Activated naive CD4-positive, alpha-beta T cell treated with anti-CD3 and anti-CD28 coated beads for 36 hours (primary cell): ENCODE measurements at regions of chr7 and their contacts with region 1.

Region 1: DNA sequence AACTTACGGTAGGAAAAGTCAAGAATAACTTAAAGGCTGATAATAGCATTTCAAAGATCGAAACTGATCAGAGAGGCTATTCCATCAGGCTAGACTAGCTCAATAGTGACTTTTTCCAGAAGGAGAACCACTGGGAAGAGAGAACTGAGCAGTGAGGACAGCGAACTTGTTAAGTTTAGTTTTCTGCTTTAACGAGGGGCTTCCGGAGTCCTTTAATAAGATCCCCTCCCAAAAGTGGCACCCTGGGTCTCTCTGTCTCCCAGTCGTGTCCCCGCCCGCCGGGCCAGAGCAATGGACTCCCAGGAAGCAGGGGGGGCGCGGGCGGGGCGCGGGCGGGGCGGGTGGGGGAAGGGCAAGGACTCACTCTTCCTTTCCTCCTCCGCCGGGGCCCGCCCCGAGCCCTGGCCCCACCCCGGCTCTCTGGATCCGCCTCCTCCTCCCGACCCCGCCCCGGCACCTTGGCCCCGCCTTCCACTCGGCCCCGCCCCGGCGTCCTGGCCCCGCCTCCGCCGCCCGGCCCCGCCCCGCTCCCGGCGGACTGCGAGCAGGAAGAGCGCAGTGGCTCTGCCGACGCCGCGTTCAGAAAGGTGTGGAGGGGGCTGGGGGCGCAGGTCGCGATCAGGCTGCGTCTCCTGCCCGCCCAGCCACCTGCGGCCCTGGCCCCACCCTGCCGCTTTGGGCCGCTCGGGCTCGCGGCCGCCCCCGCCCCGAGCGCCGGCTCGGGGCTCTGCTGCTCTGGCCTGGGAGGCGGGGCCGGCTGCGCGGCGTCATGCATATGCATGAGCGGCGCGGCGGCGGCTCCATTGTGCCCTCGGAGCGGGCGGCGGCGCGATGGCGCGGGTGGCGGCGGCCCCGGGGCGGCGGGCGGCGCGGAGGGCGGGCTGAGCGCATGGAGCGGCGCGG is at the start of gene ZMIZ2:
- DNase-seq: peak; percentile 92
- H3K4me3 Mint-ChIP-seq: peak within 1 kb of the TSS; percentile 82
- H3K27ac Mint-ChIP-seq: peak within 1 kb of the TSS; percentile 88
- H3K4me1 Mint-ChIP-seq: peaks cover 39% of the 10 kb centered on the region
- H3K27me3 Mint-ChIP-seq: no peaks in the 10 kb centered on the region
- total RNA-seq, gene ZMIZ2: 83.1 to 86.5 TPM

Region 2: GRCh38 chr7:44606450-44607254 is 141.6 kb before region 1 on chr7 and contains the start of gene OGDH:
- CTCF ChIA-PET with region 1: no interaction called
- intact Hi-C with region 1: loop called (anchors 1 kb)
- DNase-seq: peak; percentile 100
- H3K4me3 Mint-ChIP-seq: peak within 1 kb of the TSS; percentile 96
- H3K27ac Mint-ChIP-seq: peak within 1 kb of the TSS; percentile 97
- H3K4me1 Mint-ChIP-seq: peaks cover 31% of the 10 kb centered on the region
- H3K27me3 Mint-ChIP-seq: no peaks in the 10 kb centered on the region
- total RNA-seq, gene OGDH: 73.9 to 78.4 TPM

Region 3: DNA sequence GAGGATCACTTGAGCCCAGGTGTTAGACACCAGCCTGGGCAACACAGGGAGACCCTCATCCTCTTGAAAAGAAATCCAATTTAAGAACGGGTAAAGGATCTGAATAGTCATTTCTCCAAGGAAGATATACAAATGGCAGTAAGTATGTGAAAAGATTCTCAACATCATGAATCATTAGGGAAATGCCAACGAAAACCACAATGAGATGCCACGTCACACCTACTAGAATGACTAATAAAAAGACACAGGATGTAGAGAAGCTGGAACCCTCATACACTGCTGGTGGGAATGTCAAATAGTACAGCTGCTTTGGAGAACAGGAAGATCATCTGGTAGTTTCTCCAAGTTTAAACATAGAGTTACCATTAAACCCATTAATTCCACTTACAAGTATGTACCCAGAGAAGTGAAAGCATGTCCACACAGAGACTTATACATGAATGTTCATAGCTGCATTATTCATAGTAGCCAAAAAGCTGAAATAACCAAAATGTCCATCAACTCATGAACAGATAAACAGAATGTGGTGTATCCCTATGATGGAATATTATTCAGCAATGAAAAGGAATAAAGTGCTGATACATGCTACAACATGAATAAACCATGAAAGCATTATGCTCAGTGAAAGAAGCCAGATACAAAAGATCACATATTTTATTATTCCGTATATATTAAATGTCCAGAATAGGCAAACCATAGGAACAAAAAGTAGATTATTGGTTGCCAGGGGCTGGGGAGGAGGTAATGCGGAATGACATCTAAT is 12.7 kb before region 1 on chr7:
- CTCF ChIA-PET with region 1: interaction called, 3 read pairs
- intact Hi-C with region 1: loop called (anchors 1 kb)
- DNase-seq: peak; percentile 83
- H3K4me3 Mint-ChIP-seq: no peak overlapping the region
- H3K27ac Mint-ChIP-seq: peak overlapping the region; percentile 79
- H3K4me1 Mint-ChIP-seq: peaks cover 31% of the 10 kb centered on the region
- H3K27me3 Mint-ChIP-seq: no peaks in the 10 kb centered on the region